ENCODE measurements at regions of chr7 and their contacts with region 1.

Region 1: GRCh38 chr7:94276795-94277194 is 117.9 kb upstream of the COL1A2 start:
- DNase-seq: peak; percentile 5
- H3K4me3 Mint-ChIP-seq: no peak overlapping the region
- H3K27ac Mint-ChIP-seq: no peak overlapping the region
- H3K4me1 Mint-ChIP-seq: no peaks in the 10 kb centered on the region
- H3K27me3 Mint-ChIP-seq: no peaks in the 10 kb centered on the region
- CTCF ChIP-seq: no peak

Region 2: DNA sequence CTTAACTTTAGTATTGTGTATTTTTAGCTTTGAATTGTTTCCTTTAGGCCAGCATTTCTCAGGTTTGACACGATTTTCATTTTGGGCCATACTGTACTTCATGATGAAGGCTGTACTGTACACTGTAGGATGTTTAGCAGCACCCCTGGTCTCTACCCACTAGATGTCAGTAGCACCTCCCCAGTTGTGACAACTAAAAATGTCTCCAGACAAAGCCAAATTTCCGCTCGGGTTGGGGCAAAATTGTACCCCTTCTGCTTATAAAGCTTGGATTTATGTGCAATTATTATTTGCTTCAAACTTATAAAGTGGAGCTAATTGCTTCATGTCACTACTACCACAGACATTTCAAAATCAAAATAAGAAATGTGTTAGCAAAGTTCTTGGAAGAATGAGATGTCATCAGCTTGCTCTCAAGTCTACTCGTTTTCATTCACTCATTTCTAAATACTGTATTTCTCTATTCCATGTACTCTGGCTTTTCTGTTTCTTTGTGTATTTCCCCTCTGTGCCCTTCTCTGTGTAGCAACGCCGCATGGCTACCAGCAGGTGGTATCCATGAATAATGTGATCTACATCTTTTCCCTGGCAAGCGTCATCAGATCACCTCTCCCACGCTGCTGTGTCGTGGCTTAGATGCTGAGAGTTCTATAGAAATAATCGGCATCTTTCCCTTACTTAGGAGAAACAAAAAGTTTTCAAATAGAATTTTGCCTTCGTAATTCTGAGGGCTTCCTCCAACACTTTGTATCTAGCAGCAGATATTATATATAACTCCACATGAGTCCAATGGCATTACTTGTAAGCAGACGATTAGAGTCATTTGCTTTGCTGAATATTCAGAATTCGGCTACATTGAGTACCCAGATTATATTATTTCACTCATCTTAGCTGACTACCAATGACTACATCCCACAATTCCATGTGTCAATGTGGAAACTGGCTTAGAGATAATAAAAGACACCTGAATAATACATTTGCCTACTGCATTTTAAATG is 654.5 kb before region 1 on chr7:
- CTCF ChIA-PET with region 1: no interaction called
- intact Hi-C with region 1: loop called (anchors 5 kb)
- DNase-seq: peak; percentile 20
- H3K4me3 Mint-ChIP-seq: peak overlapping the region; percentile 60
- H3K27ac Mint-ChIP-seq: peak overlapping the region; percentile 60
- H3K4me1 Mint-ChIP-seq: peaks cover 7% of the 10 kb centered on the region
- H3K27me3 Mint-ChIP-seq: no peaks in the 10 kb centered on the region
- CTCF ChIP-seq: peak; percentile 59

Region 3: DNA sequence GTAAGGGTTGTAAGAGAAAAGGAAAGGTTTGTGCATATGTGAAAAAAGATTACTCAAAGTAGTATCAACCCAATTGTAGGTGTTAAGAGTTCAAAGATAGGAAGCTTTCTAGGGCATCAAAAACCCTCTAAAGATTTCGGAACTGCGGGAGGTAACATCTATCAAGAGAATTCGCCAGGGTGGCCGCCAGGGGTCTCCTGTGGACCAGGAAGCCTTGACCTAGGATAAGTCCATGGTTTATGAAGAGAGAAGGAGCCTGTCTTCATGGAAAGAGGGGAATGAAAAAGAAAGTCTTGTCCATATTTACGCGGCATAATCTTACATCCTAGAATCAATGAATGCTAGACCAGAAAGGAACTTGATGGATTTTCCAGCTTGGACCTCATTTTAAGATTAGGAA is 561.6 kb before region 1 on chr7:
- CTCF ChIA-PET with region 1: no interaction called
- intact Hi-C with region 1: loop called (anchors 2 kb)
- DNase-seq: peak; percentile 65
- H3K4me3 Mint-ChIP-seq: no peak overlapping the region
- H3K27ac Mint-ChIP-seq: no peak overlapping the region
- H3K4me1 Mint-ChIP-seq: peaks cover 27% of the 10 kb centered on the region
- H3K27me3 Mint-ChIP-seq: no peaks in the 10 kb centered on the region
- CTCF ChIP-seq: peak; percentile 47

Region 4: DNA sequence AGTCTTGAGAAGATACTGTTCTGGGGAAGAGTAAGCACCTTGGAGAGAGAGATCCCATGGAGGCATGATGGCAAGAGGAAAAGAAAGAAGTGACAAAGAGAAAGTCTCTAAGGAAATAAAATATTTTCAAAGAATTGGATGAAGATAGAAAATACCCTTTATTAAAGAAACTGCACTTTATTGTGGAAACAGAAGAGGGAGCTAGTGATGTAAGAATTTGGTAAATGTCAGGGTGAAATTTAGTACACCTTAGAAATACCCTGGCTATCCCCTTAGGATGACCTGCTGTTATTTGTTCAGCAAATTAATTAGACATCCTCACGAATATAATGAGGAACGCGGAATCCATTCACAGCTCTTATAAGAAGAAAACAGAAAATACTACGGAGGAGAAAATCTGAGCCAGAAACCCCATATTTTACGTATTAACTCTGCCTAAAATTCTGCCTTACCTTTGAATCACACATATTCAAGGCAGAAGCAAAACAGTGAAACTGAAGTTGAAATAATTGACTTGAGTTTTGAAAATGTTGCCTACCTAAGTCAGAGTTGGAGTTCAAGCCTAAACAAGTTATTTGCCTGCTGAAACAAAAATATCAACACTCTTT is 476.9 kb before region 1 on chr7:
- CTCF ChIA-PET with region 1: no interaction called
- intact Hi-C with region 1: loop called (anchors 5 kb)
- DNase-seq: no peak
- H3K4me3 Mint-ChIP-seq: no peak overlapping the region
- H3K27ac Mint-ChIP-seq: peak overlapping the region; percentile 16
- H3K4me1 Mint-ChIP-seq: peaks cover 10% of the 10 kb centered on the region
- H3K27me3 Mint-ChIP-seq: no peaks in the 10 kb centered on the region
- CTCF ChIP-seq: no peak

Measured in Calu3 (cell line).